ENCODE measurements at regions of chr13 and their contacts with region 1.

Region 1: DNA sequence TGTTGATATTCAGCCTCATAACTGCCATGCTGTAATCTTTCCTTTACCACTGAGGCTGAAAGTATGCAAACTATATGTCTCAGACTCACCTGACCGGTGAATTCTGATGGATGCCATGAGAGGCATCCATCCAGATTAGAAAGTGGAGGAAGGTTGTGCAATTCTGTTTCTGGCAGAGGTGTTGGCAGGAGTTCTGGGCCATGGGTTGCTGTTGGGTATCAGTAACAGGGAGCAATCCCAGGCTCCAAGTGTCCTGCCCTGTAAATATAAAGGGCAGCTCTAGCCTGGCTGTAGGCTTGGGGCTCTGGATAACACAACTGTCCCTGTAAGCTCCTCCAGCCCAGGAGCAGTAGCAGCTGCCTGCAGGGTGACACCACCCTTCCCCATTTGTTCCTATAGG is 77.4 kb upstream of the ABCC4 start:
- DNase-seq: no peak
- ATAC-seq: no peak
- H3K4me3 ChIP-seq: no peak overlapping the region
- H3K4me3 Mint-ChIP-seq: no peak overlapping the region
- H3K27ac ChIP-seq: no peak overlapping the region
- H3K27ac Mint-ChIP-seq: no peak overlapping the region
- H3K4me1 ChIP-seq: no peaks in the 10 kb centered on the region
- H3K4me1 Mint-ChIP-seq: peaks cover 0 to 6% (median 0%) of the 10 kb centered on the region in 7 donors
- H3K27me3 ChIP-seq: no peaks in the 10 kb centered on the region
- H3K27me3 Mint-ChIP-seq: peaks cover 0 to 17% (median 11%) of the 10 kb centered on the region in 5 donors

Region 2: DNA sequence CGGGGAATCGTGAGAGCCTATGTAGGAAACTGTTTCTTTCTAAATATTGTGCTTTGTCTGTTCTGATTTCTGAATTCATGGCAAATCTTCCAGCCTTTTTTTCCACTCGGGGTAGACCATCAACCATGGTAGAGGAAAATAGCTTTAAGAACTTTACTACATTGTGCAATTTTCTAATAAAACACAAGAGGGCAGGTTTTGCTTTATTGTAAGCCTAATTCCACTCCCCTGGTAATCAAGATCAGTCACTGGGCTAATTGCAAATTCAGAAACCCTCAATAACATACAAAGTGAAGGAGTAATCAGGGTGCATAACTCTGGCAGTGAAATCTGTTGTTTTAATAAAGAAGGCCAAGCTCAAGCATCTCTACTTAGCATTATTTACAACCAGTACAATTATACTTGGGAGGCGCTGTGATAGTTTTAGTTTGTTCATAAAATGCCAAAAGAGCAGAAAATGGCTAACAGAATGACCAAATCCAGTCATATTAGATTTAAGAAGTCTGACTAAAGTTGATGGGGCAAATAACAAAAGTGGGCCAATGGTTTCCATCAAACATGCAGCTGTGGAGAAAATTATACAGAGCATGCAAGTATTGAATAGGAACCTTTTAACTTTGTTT is 942.9 kb before region 1 on chr13:
- CTCF ChIA-PET with region 1: no interaction called
- POLR2A ChIA-PET with region 1: no interaction called
- intact Hi-C with region 1: loop called in 1 of 2 experiments (anchors 1 kb)
- DNase-seq: peak in 7 of 9 donors; percentile 18 to 63 (median 50)
- ATAC-seq: peak; percentile 73
- H3K4me3 ChIP-seq: no peak overlapping the region
- H3K4me3 Mint-ChIP-seq: no peak overlapping the region
- H3K27ac ChIP-seq: no peak overlapping the region
- H3K27ac Mint-ChIP-seq: no peak overlapping the region
- H3K4me1 ChIP-seq: no peaks in the 10 kb centered on the region
- H3K4me1 Mint-ChIP-seq: peaks cover 0 to 16% (median 0%) of the 10 kb centered on the region in 7 donors
- H3K27me3 ChIP-seq: no peaks in the 10 kb centered on the region
- H3K27me3 Mint-ChIP-seq: peaks cover 0 to 3% (median 0%) of the 10 kb centered on the region in 5 donors

Region 3: DNA sequence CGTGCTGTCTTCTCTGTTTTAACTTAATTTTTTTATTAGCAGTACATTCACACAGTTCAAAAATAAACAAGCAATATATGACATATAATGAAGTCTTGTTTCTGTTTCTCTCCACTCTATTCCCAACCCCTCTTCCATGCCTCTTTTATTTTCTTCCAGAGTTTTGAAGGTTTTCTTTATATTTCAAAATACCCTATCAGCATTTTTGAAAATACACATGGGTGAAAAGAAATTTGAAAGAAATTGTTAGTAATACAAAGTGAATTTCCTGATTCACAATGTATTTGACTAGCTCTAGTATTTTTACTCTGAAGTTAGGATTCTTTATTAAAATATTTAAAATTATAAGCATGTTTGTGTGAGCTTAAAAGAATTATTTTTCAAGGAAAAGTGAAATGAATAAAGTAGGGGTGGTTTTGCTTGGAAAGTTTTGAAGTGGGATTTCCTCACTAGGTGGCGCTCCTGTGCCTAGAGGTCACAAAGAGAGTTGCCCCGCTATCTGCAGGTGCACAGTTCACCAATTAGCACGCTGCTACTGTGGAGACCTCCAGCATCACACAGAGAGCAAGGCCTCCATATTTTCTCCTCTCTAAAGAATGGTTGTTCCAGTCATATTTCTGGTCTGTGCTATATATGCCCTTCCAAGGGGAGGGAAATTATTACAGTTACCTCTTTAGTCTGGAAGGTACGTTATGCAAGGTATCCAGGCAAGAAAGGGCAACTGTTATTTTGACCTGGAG is 703.8 kb before region 1 on chr13:
- CTCF ChIA-PET with region 1: interaction called, 4 read pairs
- POLR2A ChIA-PET with region 1: no interaction called
- intact Hi-C with region 1: loop called in 1 of 2 experiments (anchors 1 kb)
- DNase-seq: peak in 7 of 9 donors; percentile 12 to 49 (median 34)
- ATAC-seq: peak; percentile 55
- H3K4me3 ChIP-seq: no peak overlapping the region
- H3K4me3 Mint-ChIP-seq: no peak overlapping the region
- H3K27ac ChIP-seq: no peak overlapping the region
- H3K27ac Mint-ChIP-seq: no peak overlapping the region
- H3K4me1 ChIP-seq: no peaks in the 10 kb centered on the region
- H3K4me1 Mint-ChIP-seq: no peaks in the 10 kb centered on the region
- H3K27me3 ChIP-seq: no peaks in the 10 kb centered on the region
- H3K27me3 Mint-ChIP-seq: peaks cover 12 to 31% (median 20%) of the 10 kb centered on the region in 5 donors

Region 4: DNA sequence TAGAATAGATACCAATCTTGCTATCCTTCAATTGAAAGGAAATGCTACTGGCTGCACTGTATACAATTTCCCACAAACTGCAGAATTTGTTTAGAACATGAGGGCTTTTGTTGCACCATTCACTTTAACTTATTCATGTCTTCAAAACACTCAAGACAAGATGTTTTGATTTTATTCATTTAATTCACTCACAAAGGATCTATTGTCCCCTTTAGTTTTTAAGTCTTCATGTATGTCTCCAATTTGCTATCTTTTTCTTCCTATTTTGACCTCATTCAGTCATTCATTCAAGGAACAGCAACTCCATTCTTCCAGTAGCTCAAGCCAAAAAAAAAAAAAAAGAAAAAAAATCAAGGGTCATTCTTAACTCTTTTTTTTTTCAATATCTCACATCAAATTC is 535.7 kb before region 1 on chr13:
- CTCF ChIA-PET with region 1: no interaction called
- POLR2A ChIA-PET with region 1: no interaction called
- intact Hi-C with region 1: no loop called
- DNase-seq: no peak
- ATAC-seq: no peak
- H3K4me3 ChIP-seq: no peak overlapping the region
- H3K4me3 Mint-ChIP-seq: no peak overlapping the region
- H3K27ac ChIP-seq: no peak overlapping the region
- H3K27ac Mint-ChIP-seq: no peak overlapping the region
- H3K4me1 ChIP-seq: no peaks in the 10 kb centered on the region
- H3K4me1 Mint-ChIP-seq: no peaks in the 10 kb centered on the region
- H3K27me3 ChIP-seq: no peaks in the 10 kb centered on the region
- H3K27me3 Mint-ChIP-seq: peaks cover 0 to 4% (median 0%) of the 10 kb centered on the region in 5 donors

Region 5: DNA sequence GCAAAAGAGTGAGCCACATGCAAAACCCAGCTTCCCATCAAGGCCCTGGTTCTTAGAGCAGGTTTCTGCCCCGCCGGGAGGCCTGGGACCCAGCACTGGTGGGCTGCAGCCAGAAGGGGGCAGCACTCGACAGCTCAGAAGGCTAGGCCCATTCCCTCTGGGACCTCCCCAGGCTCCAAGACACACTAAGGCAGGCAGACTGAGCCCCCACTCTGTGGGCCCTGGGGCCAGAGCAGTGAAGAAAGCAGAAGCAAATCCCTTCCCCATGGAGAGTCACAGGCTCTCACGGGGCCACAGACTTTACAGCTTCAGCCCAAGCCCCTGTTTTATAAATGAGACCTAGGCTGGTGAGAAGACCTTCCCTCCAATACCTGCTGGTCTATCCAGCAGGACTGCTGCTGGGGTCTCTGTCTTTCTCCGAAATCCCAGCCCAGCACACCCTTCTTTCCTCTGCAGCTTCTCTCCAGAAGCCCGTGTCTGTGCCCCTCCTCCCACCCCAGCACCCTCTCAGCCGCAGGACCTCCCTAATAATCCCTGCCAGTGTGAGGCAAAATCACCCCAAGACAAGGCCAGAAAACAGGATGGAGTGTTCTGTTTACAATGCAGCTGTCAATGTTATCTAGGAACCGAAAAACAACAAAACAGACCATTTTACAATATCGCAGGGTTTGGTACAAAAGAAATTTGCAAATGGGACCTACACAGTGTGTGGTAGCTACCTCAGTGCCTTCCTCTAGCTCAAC is 186.6 kb before region 1 on chr13:
- CTCF ChIA-PET with region 1: interaction called, 53 read pairs
- POLR2A ChIA-PET with region 1: no interaction called
- intact Hi-C with region 1: loop called (anchors 1 kb)
- DNase-seq: peak in 8 of 9 donors; percentile 12 to 67 (median 36)
- ATAC-seq: peak; percentile 73
- H3K4me3 ChIP-seq: no peak overlapping the region
- H3K4me3 Mint-ChIP-seq: no peak overlapping the region
- H3K27ac ChIP-seq: no peak overlapping the region
- H3K27ac Mint-ChIP-seq: peak overlapping the region in 3 of 9 donors; percentile 20 to 69 (median 32)
- H3K4me1 ChIP-seq: peaks cover 0 to 2% of the 10 kb centered on the region in 2 donors
- H3K4me1 Mint-ChIP-seq: peaks cover 2 to 21% (median 19%) of the 10 kb centered on the region in 7 donors
- H3K27me3 ChIP-seq: no peaks in the 10 kb centered on the region
- H3K27me3 Mint-ChIP-seq: no peaks in the 10 kb centered on the region

Region 6: DNA sequence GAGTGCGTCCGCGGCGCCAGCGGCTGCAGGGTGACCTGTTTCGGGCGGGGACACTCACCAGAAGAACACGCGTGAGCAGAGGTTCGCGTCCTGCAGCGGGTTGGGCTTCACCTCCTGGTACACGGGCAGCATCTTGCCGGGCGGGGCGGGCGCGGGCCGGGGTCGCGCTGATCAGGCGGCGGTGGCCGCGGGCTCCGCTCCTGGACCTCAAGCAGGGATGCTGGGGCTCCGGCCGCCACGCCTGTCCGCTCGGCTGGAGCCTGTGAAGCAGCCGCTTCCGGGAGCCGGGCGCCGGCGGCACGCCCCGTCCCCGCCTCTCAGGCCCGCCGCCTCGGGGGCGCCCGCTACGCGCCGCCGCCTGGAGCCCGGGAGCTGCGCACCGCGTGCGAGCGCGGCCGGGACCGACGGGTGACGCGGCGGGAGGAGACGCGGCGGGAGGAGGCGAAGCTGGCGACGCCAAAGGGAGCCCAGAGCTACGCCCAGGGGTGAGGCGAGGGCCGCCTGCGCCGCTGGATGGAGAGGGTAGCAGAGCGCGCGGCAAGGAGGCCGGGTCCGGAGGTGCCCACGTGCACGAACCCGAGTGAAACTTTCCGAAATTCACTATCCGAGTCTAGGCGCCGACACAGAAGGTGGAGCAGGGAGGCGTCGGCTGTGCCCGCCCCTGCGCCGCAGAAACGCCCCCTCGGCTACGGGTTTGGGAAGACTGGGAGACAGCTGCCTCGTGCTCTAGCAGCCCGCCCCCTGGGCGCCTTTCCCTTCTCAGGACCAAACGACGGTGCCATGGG is 77.2 kb before region 1 on chr13 and contains the start of gene ABCC4:
- CTCF ChIA-PET with region 1: interaction called, 14 read pairs
- POLR2A ChIA-PET with region 1: no interaction called
- intact Hi-C with region 1: loop called (anchors 1 to 2 kb)
- DNase-seq: peak; percentile 22 to 78 (median 48)
- ATAC-seq: peak; percentile 86
- H3K4me3 ChIP-seq: peak within 1 kb of the TSS; percentile 50
- H3K4me3 Mint-ChIP-seq: peak within 1 kb of the TSS; percentile 84 to 96 (median 87)
- H3K27ac ChIP-seq: peak within 1 kb of the TSS; percentile 41
- H3K27ac Mint-ChIP-seq: peak within 1 kb of the TSS in 8 of 9 donors; percentile 6 to 86 (median 66)
- H3K4me1 ChIP-seq: peaks cover 0 to 5% of the 10 kb centered on the region in 2 donors
- H3K4me1 Mint-ChIP-seq: peaks cover 7 to 41% (median 27%) of the 10 kb centered on the region in 7 donors
- H3K27me3 ChIP-seq: no peaks in the 10 kb centered on the region
- H3K27me3 Mint-ChIP-seq: peaks cover 0 to 15% (median 0%) of the 10 kb centered on the region in 5 donors
- total RNA-seq, gene ABCC4: 5.8 to 9.2 (median 7.5) TPM

Region 7: GRCh38 chr13:95420501-95420900 is 41.9 kb after region 1 on chr13:
- CTCF ChIA-PET with region 1: no interaction called
- POLR2A ChIA-PET with region 1: no interaction called
- intact Hi-C with region 1: no loop called
- DNase-seq: no peak
- ATAC-seq: no peak
- H3K4me3 ChIP-seq: no peak overlapping the region
- H3K4me3 Mint-ChIP-seq: no peak overlapping the region
- H3K27ac ChIP-seq: no peak overlapping the region
- H3K27ac Mint-ChIP-seq: no peak overlapping the region
- H3K4me1 ChIP-seq: no peaks in the 10 kb centered on the region
- H3K4me1 Mint-ChIP-seq: peaks cover 0 to 5% (median 2%) of the 10 kb centered on the region in 7 donors
- H3K27me3 ChIP-seq: no peaks in the 10 kb centered on the region
- H3K27me3 Mint-ChIP-seq: peaks cover 1 to 11% (median 5%) of the 10 kb centered on the region in 5 donors